Caco-2 (cell line): ENCODE measurements at regions of chr11 and their contacts with region 1.

Region 1: GRCh38 chr11:40722179-40722795 is 737.2 kb downstream of the LRRC4C start:
- DNase-seq: peak; percentile 49 to 56
- H3K4me3 ChIP-seq: no peak overlapping the region
- H3K4me3 Mint-ChIP-seq: no peak overlapping the region
- H3K27ac Mint-ChIP-seq: no peak overlapping the region
- H3K4me1 ChIP-seq: no peaks in the 10 kb centered on the region
- H3K4me1 Mint-ChIP-seq: no peaks in the 10 kb centered on the region
- H3K27me3 ChIP-seq: no peaks in the 10 kb centered on the region
- H3K27me3 Mint-ChIP-seq: peaks cover 2% of the 10 kb centered on the region
- CTCF ChIP-seq: peak; percentile 73 to 86

Region 2: GRCh38 chr11:40306938-40307548 is 415.2 kb before region 1 on chr11:
- CTCF ChIA-PET with region 1: no interaction called
- POLR2A ChIA-PET with region 1: no interaction called
- intact Hi-C with region 1: loop called (anchors 1 kb)
- DNase-seq: peak in 1 of 2 experiments; percentile 24
- H3K4me3 ChIP-seq: no peak overlapping the region
- H3K4me3 Mint-ChIP-seq: no peak overlapping the region
- H3K27ac Mint-ChIP-seq: no peak overlapping the region
- H3K4me1 ChIP-seq: no peaks in the 10 kb centered on the region
- H3K4me1 Mint-ChIP-seq: no peaks in the 10 kb centered on the region
- H3K27me3 ChIP-seq: no peaks in the 10 kb centered on the region
- H3K27me3 Mint-ChIP-seq: peaks cover 4% of the 10 kb centered on the region
- CTCF ChIP-seq: peak; percentile 55 to 75

Region 3: GRCh38 chr11:40842750-40843339 is 120.6 kb after region 1 on chr11:
- CTCF ChIA-PET with region 1: no interaction called
- POLR2A ChIA-PET with region 1: no interaction called
- intact Hi-C with region 1: no loop called
- DNase-seq: no peak
- H3K4me3 ChIP-seq: no peak overlapping the region
- H3K4me3 Mint-ChIP-seq: no peak overlapping the region
- H3K27ac Mint-ChIP-seq: no peak overlapping the region
- H3K4me1 ChIP-seq: no peaks in the 10 kb centered on the region
- H3K4me1 Mint-ChIP-seq: no peaks in the 10 kb centered on the region
- H3K27me3 ChIP-seq: no peaks in the 10 kb centered on the region
- H3K27me3 Mint-ChIP-seq: no peaks in the 10 kb centered on the region
- CTCF ChIP-seq: no peak